H1 (cell line): ENCODE measurements at regions of chr19 and their contacts with region 1.

Region 1: GRCh38 chr19:17390665-17391370 is 3.2 kb downstream of the CCDC194 start:
- DNase-seq: peak; percentile 71 to 92
- H3K4me3 ChIP-seq: peak overlapping the region; percentile 58 to 75 (median 72)
- H3K27ac ChIP-seq: no peak overlapping the region
- H3K4me1 ChIP-seq: peaks cover 0 to 7% (median 3%) of the 10 kb centered on the region in 4 experiments; a peak in 5 of 7 replicates
- H3K27me3 ChIP-seq: peaks cover 0 to 5% (median 0%) of the 10 kb centered on the region in 4 experiments; a peak in 2 of 7 replicates
- CTCF ChIP-seq: peak; percentile 79 to 87 (median 79)
- EP300 ChIP-seq: peak in 1 of 2 experiments; percentile 68; a peak in 1 of 3 replicates
- POLR2A ChIP-seq: no peak; a peak in 1 of 3 replicates
- RAD21 ChIP-seq: peak; percentile 56 to 71

Region 2: GRCh38 chr19:17336872-17337722 is 53.7 kb before region 1 on chr19 and contains the start of gene GTPBP3:
- CTCF ChIA-PET with region 1: interaction called, 153 read pairs
- POLR2A ChIA-PET with region 1: interaction called, 8 read pairs
- DNase-seq: peak; percentile 94 to 96
- H3K4me3 ChIP-seq: peak within 1 kb of the TSS; percentile 74 to 99 (median 96)
- H3K27ac ChIP-seq: peak within 1 kb of the TSS; percentile 83
- H3K4me1 ChIP-seq: peaks cover 0 to 36% (median 28%) of the 10 kb centered on the region in 4 experiments; a peak in 5 of 7 replicates
- H3K27me3 ChIP-seq: no peaks in the 10 kb centered on the region
- CTCF ChIP-seq: no peak
- EP300 ChIP-seq: no peak
- POLR2A ChIP-seq: peak in 1 of 2 experiments; percentile 86; a peak in 2 of 3 replicates
- RAD21 ChIP-seq: no peak
- total RNA-seq, gene GTPBP3: 52.7 and 56.0 TPM in 2 replicates

Region 3: GRCh38 chr19:17346109-17346671 is 44.6 kb before region 1 on chr19:
- CTCF ChIA-PET with region 1: interaction called, 153 read pairs
- POLR2A ChIA-PET with region 1: interaction called, 6 read pairs
- DNase-seq: peak; percentile 63 to 98
- H3K4me3 ChIP-seq: no peak overlapping the region
- H3K27ac ChIP-seq: no peak overlapping the region
- H3K4me1 ChIP-seq: peaks cover 0 to 4% (median 3%) of the 10 kb centered on the region in 4 experiments; a peak in 3 of 7 replicates
- H3K27me3 ChIP-seq: no peaks in the 10 kb centered on the region
- CTCF ChIP-seq: peak; percentile 91 to 95 (median 93)
- EP300 ChIP-seq: no peak
- POLR2A ChIP-seq: no peak
- RAD21 ChIP-seq: peak; percentile 76 to 78

Region 4: DNA sequence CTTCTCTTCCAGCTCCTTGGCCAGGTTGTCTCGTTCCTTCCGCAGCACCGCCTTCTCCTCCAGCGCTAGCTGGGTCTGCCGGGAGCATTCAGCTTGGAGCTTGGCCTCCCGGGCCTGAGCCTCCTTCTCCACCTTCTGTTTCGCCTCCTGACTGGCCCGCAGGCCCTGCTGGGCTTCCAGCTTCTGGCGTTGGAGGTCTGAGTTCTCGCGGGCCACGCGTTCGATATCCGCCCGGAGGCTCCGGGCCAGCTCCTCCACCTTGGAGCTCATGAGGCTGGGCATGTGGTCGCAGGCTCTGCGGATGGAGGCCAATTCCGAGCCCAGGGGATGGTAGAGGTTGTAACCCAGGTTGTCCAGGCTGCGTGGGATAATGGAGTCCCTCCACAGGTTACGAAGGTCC is 25.5 kb before region 1 on chr19:
- CTCF ChIA-PET with region 1: interaction called, 19 read pairs
- POLR2A ChIA-PET with region 1: interaction called, 3 read pairs
- DNase-seq: no peak
- H3K4me3 ChIP-seq: no peak overlapping the region
- H3K27ac ChIP-seq: no peak overlapping the region
- H3K4me1 ChIP-seq: no peaks in the 10 kb centered on the region
- H3K27me3 ChIP-seq: no peaks in the 10 kb centered on the region
- CTCF ChIP-seq: no peak
- EP300 ChIP-seq: no peak
- POLR2A ChIP-seq: no peak
- RAD21 ChIP-seq: no peak

Region 5: DNA sequence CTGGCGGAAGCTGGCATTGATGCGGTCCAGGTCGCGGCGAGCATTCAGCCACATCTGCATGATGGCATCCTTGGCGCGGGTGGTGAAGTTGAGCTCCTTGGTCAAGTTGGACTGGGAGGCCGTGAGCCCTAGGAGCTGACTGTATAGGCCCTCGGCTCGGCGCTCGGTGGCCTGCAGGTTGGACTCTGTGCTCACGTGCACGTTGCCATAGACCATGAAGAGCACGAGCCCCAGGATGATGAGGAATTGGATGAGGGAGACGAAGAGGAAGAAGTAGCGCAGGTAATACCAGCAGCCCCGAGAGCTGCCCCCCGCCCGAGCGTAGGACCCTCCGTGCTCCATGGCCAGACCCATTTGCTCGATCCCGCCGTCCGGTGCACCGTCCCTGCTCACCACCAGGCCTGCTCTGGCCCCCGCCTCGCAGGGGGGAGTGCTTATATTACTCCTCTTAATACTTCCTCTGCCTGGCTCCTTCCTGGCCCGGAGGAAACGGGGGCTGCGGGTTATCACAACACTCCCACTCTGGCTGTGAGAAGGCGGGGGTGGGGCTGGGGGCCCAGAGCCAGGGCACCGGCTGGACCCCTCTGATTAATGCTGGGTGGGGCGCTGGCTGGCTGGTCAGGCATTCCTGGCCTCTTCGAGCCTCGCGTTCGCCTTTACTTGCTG is 13.8 kb before region 1 on chr19 and contains the start of gene PLVAP:
- CTCF ChIA-PET with region 1: interaction called, 14 read pairs
- POLR2A ChIA-PET with region 1: interaction called, 3 read pairs
- DNase-seq: no peak
- H3K4me3 ChIP-seq: no peak within 1 kb of the TSS
- H3K27ac ChIP-seq: no peak within 1 kb of the TSS
- H3K4me1 ChIP-seq: peaks cover 0 to 9% (median 6%) of the 10 kb centered on the region in 4 experiments; a peak in 5 of 7 replicates
- H3K27me3 ChIP-seq: no peaks in the 10 kb centered on the region
- CTCF ChIP-seq: no peak
- EP300 ChIP-seq: no peak
- POLR2A ChIP-seq: no peak
- RAD21 ChIP-seq: no peak
- total RNA-seq, gene PLVAP: 0.27 TPM in 1 of 2 replicates, not detected in the other

Region 6: DNA sequence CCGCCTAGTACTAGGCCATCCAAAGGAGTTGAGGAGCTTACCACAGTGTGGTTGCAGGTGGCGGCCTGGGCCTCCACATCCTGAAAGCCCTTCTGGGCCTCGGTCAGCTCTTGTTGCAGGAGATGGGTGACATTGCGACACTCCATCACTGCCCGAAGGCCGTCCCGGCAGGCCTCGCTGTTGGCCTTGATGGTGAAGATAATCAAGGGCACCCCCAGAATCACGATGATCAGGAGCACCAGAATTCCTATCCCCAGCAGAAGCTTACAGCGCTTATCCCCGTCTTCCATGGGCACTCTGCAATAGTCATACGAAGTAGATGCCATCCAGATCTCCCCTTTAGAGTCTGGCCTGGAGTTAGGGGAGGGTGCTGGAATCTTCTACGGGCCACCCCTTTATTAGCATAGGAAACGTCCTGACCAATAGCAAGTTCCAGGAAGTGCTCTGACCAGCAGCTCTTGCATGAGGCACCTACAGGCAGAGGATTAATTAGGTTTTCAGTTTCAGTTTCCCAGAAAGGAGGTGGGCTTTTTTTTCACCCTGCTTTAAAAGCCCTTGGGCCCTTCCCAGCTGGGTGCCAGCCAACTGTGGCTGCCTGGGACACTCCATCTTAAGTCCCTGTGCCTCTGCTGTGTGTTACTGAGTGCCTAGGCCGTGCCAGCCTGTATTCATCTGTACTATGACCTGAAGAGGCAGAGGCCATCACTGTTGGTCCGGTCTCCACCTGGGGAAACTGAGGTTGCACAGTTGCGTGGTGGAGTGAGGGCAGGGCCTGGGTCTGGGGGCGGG is 14.6 kb after region 1 on chr19 and contains the start of gene BST2:
- CTCF ChIA-PET with region 1: interaction called, 9 read pairs
- POLR2A ChIA-PET with region 1: interaction called, 12 read pairs
- DNase-seq: no peak
- H3K4me3 ChIP-seq: peak within 1 kb of the TSS; percentile 39 to 75 (median 58); a peak in 7 of 8 replicates
- H3K27ac ChIP-seq: peak within 1 kb of the TSS; percentile 81
- H3K4me1 ChIP-seq: peaks cover 4 to 23% (median 13%) of the 10 kb centered on the region in 4 experiments
- H3K27me3 ChIP-seq: no peaks in the 10 kb centered on the region
- CTCF ChIP-seq: no peak
- EP300 ChIP-seq: no peak
- POLR2A ChIP-seq: peak in 1 of 2 experiments; percentile 40; a peak in 1 of 3 replicates
- RAD21 ChIP-seq: no peak
- total RNA-seq, gene BST2: 16.8 and 18.1 TPM in 2 replicates

Region 7: DNA sequence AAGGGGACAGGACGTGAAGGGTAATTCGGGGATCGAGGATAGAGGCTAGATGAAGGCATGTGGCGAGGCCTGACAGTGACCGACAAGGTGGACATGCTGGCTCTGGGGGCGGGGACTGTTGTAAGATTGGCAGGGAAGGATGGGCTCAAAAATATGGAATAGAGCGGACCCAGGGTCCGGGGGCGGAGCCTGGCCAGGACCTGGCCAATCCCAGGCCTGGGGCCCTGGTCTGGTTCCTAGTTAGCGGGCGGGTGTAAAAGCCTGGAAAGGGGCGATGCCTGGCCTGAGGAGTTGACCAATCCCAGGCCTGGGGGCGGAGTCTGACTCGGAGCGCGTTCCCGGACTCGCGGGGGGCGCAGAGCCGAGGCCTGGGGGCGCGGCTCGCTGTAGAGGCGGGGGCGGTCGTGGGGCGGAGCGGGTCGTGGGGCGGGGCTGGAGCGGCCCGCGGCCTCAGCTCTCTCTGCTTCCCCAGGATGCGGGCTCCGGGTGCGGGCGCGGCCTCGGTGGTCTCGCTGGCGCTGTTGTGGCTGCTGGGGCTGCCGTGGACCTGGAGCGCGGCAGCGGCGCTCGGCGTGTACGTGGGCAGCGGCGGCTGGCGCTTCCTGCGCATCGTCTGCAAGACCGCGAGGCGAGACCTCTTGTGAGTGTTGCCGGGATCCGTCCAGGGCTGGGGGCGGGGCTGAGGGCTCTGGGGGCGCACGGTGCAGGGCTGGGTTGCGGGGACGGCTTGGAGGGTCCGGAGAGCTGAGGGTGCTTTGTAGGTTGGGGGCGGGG is 79.4 kb after region 1 on chr19 and contains the start of gene SLC27A1:
- CTCF ChIA-PET with region 1: interaction called, 20 read pairs
- POLR2A ChIA-PET with region 1: no interaction called
- DNase-seq: peak; percentile 96 to 97
- H3K4me3 ChIP-seq: peak within 1 kb of the TSS; percentile 70 to 84 (median 79)
- H3K27ac ChIP-seq: no peak within 1 kb of the TSS
- H3K4me1 ChIP-seq: peaks cover 0 to 20% (median 8%) of the 10 kb centered on the region in 4 experiments; a peak in 5 of 7 replicates
- H3K27me3 ChIP-seq: peaks cover 0 to 11% (median 5%) of the 10 kb centered on the region in 4 experiments; a peak in 3 of 7 replicates
- CTCF ChIP-seq: no peak
- EP300 ChIP-seq: no peak
- POLR2A ChIP-seq: peak in 1 of 2 experiments; percentile 54; a peak in 1 of 3 replicates
- RAD21 ChIP-seq: no peak
- total RNA-seq, gene SLC27A1: 7.3 and 7.5 TPM in 2 replicates

Region 8: DNA sequence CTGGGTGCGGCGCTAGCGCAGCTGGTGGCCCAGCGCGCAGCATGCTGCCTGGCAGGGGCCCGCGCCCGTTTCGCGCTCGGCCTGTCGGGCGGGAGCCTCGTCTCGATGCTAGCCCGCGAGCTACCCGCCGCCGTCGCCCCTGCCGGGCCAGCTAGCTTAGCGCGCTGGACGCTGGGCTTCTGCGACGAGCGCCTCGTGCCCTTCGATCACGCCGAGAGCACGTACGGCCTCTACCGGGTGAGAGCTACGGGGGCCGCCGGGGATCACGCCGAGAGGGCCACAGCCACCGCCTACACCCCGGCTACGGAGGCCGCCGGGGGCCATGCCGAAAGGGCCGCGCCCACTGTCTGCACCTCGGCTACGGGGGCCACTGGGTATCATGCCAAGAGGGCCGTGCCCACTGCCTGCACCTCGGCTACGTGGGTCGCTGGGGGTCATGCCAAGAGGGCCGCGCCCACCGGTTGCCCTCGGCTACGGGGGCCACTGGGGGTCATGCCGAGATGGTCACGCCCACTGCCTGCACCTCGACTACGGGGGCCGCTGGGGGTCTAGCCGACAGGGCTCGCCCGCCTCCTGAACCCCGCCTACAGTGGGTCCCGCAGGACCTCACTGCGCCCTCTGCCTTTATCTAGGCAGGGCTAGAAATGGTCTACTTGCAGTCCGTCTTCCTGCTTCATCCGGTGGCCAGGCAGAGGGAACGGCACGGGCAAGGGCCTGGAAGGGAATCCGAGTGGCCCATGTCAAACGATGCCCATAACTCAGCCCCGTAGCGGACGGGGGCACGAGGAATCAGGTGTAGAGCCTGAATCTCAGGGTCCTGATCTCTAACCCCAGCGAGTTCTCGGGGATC is 121.1 kb after region 1 on chr19:
- CTCF ChIA-PET with region 1: no interaction called
- POLR2A ChIA-PET with region 1: no interaction called
- DNase-seq: peak; percentile 71 to 91
- H3K4me3 ChIP-seq: peak overlapping the region; percentile 73 to 91 (median 79)
- H3K27ac ChIP-seq: peak overlapping the region; percentile 93
- H3K4me1 ChIP-seq: peaks cover 0 to 6% (median 2%) of the 10 kb centered on the region in 4 experiments; a peak in 3 of 7 replicates
- H3K27me3 ChIP-seq: no peaks in the 10 kb centered on the region; a peak in 1 of 7 replicates
- CTCF ChIP-seq: peak; percentile 38 to 39 (median 39)
- EP300 ChIP-seq: peak in 1 of 2 experiments; percentile 12; a peak in 1 of 3 replicates
- POLR2A ChIP-seq: peak in 1 of 2 experiments; percentile 45; a peak in 2 of 3 replicates
- RAD21 ChIP-seq: peak; percentile 21 to 35; a peak in 2 of 4 replicates